ENCODE measurements at regions of chr14 and their contacts with region 1.

Region 1: GRCh38 chr14:63852817-63853731 is at the start of gene SYNE2:
- DNase-seq: peak; percentile 81 to 84
- ATAC-seq: peak; percentile 88 to 96 (median 94)
- H3K4me3 ChIP-seq: peak within 1 kb of the TSS; percentile 69 to 90 (median 78)
- H3K27ac ChIP-seq: peak within 1 kb of the TSS; percentile 85 to 95 (median 93)
- H3K4me1 ChIP-seq: peaks cover 0 to 58% (median 42%) of the 10 kb centered on the region in 9 donors
- H3K27me3 ChIP-seq: peaks cover 0 to 41% (median 0%) of the 10 kb centered on the region in 7 donors
- CTCF ChIP-seq: peak; percentile 17 to 64 (median 47)
- total RNA-seq, gene SYNE2: 88.4 to 205 (median 110) TPM

Region 2: GRCh38 chr14:63342371-63342770 is 510.7 kb before region 1 on chr14:
- intact Hi-C with region 1: no loop called
- DNase-seq: no peak
- ATAC-seq: no peak
- H3K4me3 ChIP-seq: no peak overlapping the region
- H3K27ac ChIP-seq: no peak overlapping the region
- H3K4me1 ChIP-seq: no peaks in the 10 kb centered on the region
- H3K27me3 ChIP-seq: no peaks in the 10 kb centered on the region
- CTCF ChIP-seq: no peak

Region 3: DNA sequence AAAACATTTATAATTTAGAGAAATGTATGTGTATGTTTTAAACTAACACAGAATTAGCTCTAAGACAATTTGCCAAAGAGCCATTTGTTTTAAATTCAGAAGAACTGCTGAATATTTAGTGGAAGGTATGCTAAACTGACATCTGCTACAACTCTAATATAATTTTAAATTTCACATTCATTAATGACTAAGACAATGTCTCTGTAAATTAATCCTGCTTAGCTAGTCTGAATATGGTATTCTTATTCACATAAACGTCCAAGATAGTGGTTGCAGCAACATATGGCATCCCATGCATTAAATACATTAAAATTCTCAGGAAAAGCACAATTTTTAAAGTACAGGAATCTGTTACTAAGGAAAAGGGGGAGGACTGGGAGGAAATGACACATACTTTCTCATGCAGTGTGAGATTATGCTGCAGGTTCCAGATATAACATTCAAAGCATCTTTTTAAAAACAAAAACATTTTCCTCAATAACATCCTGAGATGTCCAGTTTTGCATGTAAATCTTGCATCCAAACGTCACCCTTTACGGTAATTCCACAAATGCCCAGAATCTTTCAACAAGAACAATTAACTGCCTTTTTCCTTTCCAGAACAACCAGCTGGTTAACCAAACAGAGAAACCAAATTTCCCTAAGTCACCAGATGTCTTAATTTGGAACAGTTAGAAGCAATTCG is 238.3 kb before region 1 on chr14:
- intact Hi-C with region 1: no loop called
- DNase-seq: no peak
- ATAC-seq: peak in 4 of 8 donors; percentile 24 to 56 (median 28)
- H3K4me3 ChIP-seq: no peak overlapping the region
- H3K27ac ChIP-seq: peak overlapping the region in 4 of 10 donors; percentile 2 to 41 (median 31)
- H3K4me1 ChIP-seq: peaks cover 0 to 24% (median 11%) of the 10 kb centered on the region in 9 donors
- H3K27me3 ChIP-seq: no peaks in the 10 kb centered on the region
- CTCF ChIP-seq: no peak

Region 4: GRCh38 chr14:63875311-63875710 is 22.2 kb after region 1 on chr14:
- intact Hi-C with region 1: loop called in 1 of 10 experiments (anchors 2 kb)
- DNase-seq: peak in 1 of 2 donors; percentile 79
- ATAC-seq: peak; percentile 80 to 95 (median 91)
- H3K4me3 ChIP-seq: no peak overlapping the region
- H3K27ac ChIP-seq: peak overlapping the region; percentile 2 to 92 (median 76)
- H3K4me1 ChIP-seq: peaks cover 4 to 73% (median 52%) of the 10 kb centered on the region in 9 donors
- H3K27me3 ChIP-seq: no peaks in the 10 kb centered on the region
- CTCF ChIP-seq: no peak

Region 5: GRCh38 chr14:63910583-63911363 is 57.7 kb after region 1 on chr14:
- intact Hi-C with region 1: loop called in 1 of 10 experiments (anchors 10 kb)
- DNase-seq: no peak
- ATAC-seq: peak in 1 of 8 donors; percentile 45
- H3K4me3 ChIP-seq: no peak overlapping the region
- H3K27ac ChIP-seq: no peak overlapping the region
- H3K4me1 ChIP-seq: peaks cover 0 to 52% (median 18%) of the 10 kb centered on the region in 9 donors
- H3K27me3 ChIP-seq: peaks cover 0 to 44% (median 0%) of the 10 kb centered on the region in 7 donors
- CTCF ChIP-seq: no peak

Region 6: DNA sequence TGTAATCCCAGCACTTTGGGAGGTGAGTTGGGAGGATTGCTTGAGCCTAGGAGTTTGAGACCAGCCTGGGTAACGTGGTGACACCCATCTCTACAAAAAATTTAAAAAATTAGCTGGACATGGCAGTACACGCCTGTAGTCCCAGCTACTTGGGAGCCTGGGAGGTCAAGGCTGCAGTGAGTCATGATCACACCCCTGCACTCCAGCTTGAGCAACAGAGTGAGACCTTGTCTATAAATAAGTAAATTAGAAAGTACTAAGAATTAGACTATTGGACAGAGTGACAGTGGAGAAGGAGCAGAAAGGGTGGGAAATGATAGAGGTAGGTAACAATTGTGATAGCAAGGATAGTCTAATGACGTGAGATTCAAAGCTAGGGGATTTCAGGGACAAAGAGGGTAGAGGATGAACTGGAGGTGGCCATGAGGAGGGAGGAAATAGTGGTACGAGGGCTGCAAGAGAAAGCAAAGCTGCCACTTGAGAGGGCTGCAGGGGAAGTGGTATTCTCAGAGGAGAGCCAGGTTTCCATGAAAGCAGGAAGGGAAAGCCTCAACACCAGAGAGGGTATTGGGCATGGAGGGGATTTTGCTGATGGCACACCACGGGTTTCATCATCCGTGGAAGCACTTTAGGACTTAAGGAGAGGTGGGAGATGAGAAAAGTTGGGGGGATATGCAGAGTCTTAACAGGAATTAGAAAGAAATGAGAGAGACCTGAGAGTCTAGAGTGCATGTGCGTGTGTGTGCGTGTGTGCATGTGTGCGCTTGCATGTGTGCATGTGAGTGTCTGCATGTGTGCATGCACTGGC is 85.3 kb after region 1 on chr14:
- intact Hi-C with region 1: loop called in 3 of 10 experiments (anchors 5 to 10 kb)
- DNase-seq: no peak
- ATAC-seq: peak in 1 of 8 donors; percentile 22
- H3K4me3 ChIP-seq: no peak overlapping the region
- H3K27ac ChIP-seq: no peak overlapping the region
- H3K4me1 ChIP-seq: peaks cover 0 to 15% (median 4%) of the 10 kb centered on the region in 9 donors
- H3K27me3 ChIP-seq: no peaks in the 10 kb centered on the region
- CTCF ChIP-seq: no peak

Region 7: DNA sequence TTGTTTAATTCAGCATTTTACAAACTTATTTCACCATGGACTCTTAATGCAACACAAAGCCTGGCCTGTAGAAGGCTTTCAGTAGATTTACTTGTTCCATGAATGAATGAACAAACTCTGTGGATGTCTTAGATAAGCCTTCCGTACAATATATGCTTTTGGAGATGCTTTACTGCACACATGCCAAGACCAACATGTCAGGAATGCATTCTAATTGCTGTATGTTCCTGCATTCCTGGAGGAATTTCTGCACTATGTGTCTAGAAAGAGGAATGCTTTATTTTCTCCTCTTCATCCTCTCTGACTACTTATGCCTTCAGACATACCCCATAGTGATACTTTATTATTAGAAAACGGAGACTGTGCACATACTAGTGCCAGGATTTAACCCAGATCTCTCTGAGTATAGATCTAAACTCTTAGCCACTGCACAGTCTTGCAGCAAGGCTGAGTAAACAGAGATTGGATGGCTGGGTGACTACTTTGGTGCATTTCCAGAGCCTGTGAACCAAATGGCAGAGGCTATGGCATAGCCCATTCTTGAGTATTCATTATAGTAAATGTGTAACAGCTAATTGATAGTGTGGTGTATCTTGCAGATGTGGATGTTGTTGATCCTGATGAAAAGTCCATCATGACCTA is 108.0 kb after region 1 on chr14:
- intact Hi-C with region 1: loop called in 2 of 10 experiments (anchors 10 kb)
- DNase-seq: no peak
- ATAC-seq: no peak
- H3K4me3 ChIP-seq: no peak overlapping the region
- H3K27ac ChIP-seq: no peak overlapping the region
- H3K4me1 ChIP-seq: peaks cover 0 to 12% (median 0%) of the 10 kb centered on the region in 9 donors
- H3K27me3 ChIP-seq: no peaks in the 10 kb centered on the region
- CTCF ChIP-seq: no peak

Region 8: DNA sequence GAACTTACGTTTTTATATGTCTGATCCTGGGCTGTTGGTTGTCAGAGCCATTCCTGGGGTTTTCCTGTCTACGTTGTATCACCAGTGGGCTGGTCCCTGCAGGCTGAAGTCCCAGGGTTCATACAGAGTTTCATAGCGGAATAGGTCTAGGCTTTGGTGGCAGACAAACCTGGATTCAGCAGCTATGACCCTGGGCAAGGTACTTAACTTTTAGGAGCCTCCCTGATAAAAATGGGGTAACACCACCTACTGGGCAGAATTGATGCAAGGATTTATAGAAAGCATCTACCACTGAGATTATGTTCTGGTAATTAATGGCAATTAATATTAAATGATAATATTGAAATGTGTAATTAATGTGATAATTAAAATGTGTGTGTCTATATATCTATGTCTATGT is 140.9 kb after region 1 on chr14:
- intact Hi-C with region 1: loop called in 2 of 10 experiments (anchors 5 to 10 kb)
- DNase-seq: no peak
- ATAC-seq: no peak
- H3K4me3 ChIP-seq: no peak overlapping the region
- H3K27ac ChIP-seq: no peak overlapping the region
- H3K4me1 ChIP-seq: no peaks in the 10 kb centered on the region
- H3K27me3 ChIP-seq: no peaks in the 10 kb centered on the region
- CTCF ChIP-seq: peak in 7 of 9 donors; percentile 22 to 51 (median 31)

Region 9: DNA sequence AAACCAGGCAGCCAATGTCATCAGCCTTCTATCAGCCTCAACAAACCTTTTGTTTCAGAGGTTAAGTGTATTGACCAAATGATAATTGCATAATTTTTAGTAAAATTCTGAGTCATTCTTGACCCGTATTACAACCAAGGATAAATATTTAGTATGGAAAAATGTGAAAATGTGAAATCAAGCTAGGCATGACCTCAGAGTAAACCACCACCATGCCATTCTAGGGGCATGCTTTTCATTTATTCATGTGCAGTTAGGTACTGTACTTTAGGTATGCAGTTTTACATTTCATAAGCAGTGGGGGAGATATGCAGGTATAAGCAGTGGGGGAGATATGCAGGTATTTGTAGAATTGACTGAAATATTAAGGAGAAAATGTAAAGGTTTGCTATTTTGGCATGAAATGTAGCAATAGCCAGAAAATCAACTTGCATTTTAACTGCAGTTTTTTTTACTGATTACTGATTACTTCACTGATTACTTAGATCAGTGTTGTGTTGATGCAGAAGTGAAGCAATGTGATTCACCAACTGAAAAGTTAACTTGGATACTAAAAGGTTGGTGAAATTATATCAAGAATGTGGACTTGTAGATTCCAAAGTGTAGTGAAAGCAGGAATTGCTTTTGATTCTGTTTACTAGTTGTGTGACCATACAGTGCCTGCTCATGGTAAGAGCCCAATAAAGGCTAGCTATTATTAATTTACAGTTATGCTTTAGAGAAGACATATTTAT is 256.9 kb after region 1 on chr14:
- intact Hi-C with region 1: no loop called
- DNase-seq: no peak
- ATAC-seq: no peak
- H3K4me3 ChIP-seq: no peak overlapping the region
- H3K27ac ChIP-seq: no peak overlapping the region
- H3K4me1 ChIP-seq: peaks cover 0 to 14% (median 0%) of the 10 kb centered on the region in 9 donors
- H3K27me3 ChIP-seq: no peaks in the 10 kb centered on the region
- CTCF ChIP-seq: no peak

Measured in heart right ventricle (tissue), 16 donors.